ENCODE measurements at regions of chr18 and their contacts with region 1.

Region 1: GRCh38 chr18:32083781-32084180 is 7.9 kb upstream of the RNF138 start:
- DNase-seq: no peak
- ATAC-seq: no peak
- H3K4me3 ChIP-seq: no peak overlapping the region
- H3K27ac ChIP-seq: no peak overlapping the region
- H3K4me1 ChIP-seq: peaks cover 7% of the 10 kb centered on the region; the same call in 1 of the 2 replicates
- H3K27me3 ChIP-seq: no peaks in the 10 kb centered on the region
- CTCF ChIP-seq: no peak
- EP300 ChIP-seq: no peak
- POLR2A ChIP-seq: no peak
- RAD21 ChIP-seq: no peak

Region 2: DNA sequence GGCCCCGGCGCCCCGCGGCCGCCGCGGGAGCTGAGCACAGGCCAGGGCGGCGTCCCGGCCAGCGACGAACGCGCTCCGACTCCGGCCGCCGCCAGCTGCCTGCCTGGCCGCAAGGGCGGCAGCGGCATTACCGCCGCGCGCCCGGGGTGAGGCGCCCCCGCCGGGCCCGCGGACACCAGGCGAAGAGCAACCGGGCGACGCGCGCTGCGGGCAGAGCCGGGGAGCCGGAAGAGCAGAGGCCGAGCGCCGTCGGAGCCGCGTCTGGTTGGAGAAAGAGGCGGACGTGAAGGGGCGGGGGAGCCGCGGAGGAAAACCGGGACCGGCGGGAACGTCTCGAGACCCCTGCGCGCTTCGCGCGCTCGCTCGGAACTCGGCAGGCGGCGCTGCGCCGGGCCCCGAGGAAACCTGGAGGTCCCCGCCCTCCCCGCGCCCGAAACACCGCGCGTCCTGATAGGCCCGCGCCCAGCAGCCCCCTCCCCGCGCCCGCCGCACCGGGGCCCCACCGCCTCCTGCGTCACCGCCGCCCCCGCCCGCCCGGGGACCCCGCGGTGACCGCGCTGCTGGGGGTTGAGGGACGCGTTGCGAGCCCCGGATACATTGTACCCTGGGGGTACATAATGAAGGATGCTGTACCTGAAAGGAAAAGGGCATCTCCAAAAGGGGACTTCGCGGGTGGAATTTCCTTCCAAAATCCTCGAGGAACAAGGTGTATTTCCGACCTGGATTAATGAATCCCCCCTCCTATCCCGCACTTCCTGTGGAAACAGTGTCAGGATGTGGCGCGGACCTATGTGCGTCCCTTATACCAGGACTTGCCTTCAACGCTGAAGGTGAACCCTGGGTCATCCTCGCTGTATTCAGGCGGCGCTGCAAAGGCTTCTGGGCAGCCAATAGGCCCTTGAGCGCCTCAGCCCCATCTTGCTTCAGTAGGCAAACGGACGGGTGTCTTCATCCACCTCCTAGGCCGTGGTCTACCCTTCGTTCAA is 398.4 kb before region 1 on chr18:
- CTCF ChIA-PET with region 1: no interaction called
- POLR2A ChIA-PET with region 1: no interaction called
- RAD21 ChIA-PET with region 1: no interaction called
- SMC1A ChIA-PET with region 1: no interaction called
- in situ Hi-C with region 1: no loop called
- intact Hi-C with region 1: no loop called
- DNase-seq: peak; percentile 40
- ATAC-seq: peak; percentile 71
- H3K4me3 ChIP-seq: peak overlapping the region; percentile 75
- H3K27ac ChIP-seq: peak overlapping the region; percentile 88
- H3K4me1 ChIP-seq: peaks cover 13% of the 10 kb centered on the region
- H3K27me3 ChIP-seq: no peaks in the 10 kb centered on the region
- CTCF ChIP-seq: peak; percentile 42 to 48 (median 47); a peak in 4 of 6 replicates
- EP300 ChIP-seq: no peak
- POLR2A ChIP-seq: peak; percentile 79
- RAD21 ChIP-seq: 0 out of 2 replicates have a peak, but pooled peaks have one; percentile 15

Region 3: GRCh38 chr18:32072321-32072720 is 11.5 kb before region 1 on chr18:
- CTCF ChIA-PET with region 1: interaction called, 15 read pairs
- POLR2A ChIA-PET with region 1: interaction called, 3 read pairs
- RAD21 ChIA-PET with region 1: interaction called, 3 read pairs
- SMC1A ChIA-PET with region 1: interaction called, 3 read pairs
- in situ Hi-C with region 1: no loop called
- intact Hi-C with region 1: no loop called
- DNase-seq: no peak
- ATAC-seq: peak; percentile 73
- H3K4me3 ChIP-seq: no peak overlapping the region
- H3K27ac ChIP-seq: no peak overlapping the region
- H3K4me1 ChIP-seq: no peaks in the 10 kb centered on the region
- H3K27me3 ChIP-seq: no peaks in the 10 kb centered on the region
- CTCF ChIP-seq: peak; percentile 38 to 51 (median 47); a peak in 4 of 6 replicates
- EP300 ChIP-seq: no peak
- POLR2A ChIP-seq: no peak
- RAD21 ChIP-seq: peak; percentile 69

Region 4: DNA sequence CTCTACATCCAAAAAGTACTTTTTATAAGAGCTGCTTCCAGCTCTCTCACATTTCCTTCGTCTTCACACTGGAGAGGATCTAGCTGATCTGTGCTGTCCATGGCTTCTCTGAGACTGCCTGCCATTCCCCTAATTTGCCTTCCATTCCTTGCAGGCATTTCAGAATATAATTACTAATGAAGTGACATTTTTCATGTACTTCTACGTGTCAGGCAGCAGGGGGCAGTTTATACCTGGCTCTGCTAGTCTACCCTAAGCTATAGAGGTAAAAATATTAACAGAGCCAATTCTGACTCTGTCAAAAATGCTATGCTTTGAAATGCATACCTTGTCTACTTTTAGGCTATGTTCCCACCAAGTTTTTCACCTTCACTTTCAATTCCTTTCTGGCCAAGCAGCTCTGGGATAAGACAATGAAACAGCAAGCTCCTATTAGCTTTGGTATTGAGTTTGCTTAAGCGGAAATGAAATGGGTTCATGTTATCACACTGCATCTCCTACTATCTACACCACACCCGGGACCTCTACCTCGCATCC is 188.0 kb after region 1 on chr18:
- CTCF ChIA-PET with region 1: no interaction called
- POLR2A ChIA-PET with region 1: no interaction called
- RAD21 ChIA-PET with region 1: no interaction called
- SMC1A ChIA-PET with region 1: no interaction called
- in situ Hi-C with region 1: no loop called
- intact Hi-C with region 1: no loop called
- DNase-seq: no peak
- ATAC-seq: peak; percentile 82
- H3K4me3 ChIP-seq: no peak overlapping the region
- H3K27ac ChIP-seq: no peak overlapping the region
- H3K4me1 ChIP-seq: no peaks in the 10 kb centered on the region
- H3K27me3 ChIP-seq: peaks cover 0 to 6% of the 10 kb centered on the region in 2 experiments; a peak in 2 of 4 replicates
- CTCF ChIP-seq: peak; percentile 53 to 63 (median 58); a peak in 5 of 6 replicates
- EP300 ChIP-seq: no peak
- POLR2A ChIP-seq: no peak
- RAD21 ChIP-seq: peak; percentile 68